Right ventricle myocardium superior (tissue), 1 donor: ENCODE measurements at regions of chr11 and their contacts with region 1.

Region 1: GRCh38 chr11:118290923-118291322 is 13.6 kb upstream of the CD3E start:
- DNase-seq: no peak
- ATAC-seq: peak; percentile 90

Region 2: GRCh38 chr11:118145285-118146227 is 145.4 kb before region 1 on chr11:
- intact Hi-C with region 1: loop called (anchors 5 kb)
- DNase-seq: peak; percentile 91
- ATAC-seq: peak; percentile 92

Region 3: GRCh38 chr11:118198370-118198769 is 92.6 kb before region 1 on chr11:
- intact Hi-C with region 1: loop called (anchors 5 kb)
- DNase-seq: peak; percentile 90
- ATAC-seq: peak; percentile 66